Heart left ventricle (tissue), 16 donors: ENCODE measurements at regions of chr9 and their contacts with region 1.

Region 1: DNA sequence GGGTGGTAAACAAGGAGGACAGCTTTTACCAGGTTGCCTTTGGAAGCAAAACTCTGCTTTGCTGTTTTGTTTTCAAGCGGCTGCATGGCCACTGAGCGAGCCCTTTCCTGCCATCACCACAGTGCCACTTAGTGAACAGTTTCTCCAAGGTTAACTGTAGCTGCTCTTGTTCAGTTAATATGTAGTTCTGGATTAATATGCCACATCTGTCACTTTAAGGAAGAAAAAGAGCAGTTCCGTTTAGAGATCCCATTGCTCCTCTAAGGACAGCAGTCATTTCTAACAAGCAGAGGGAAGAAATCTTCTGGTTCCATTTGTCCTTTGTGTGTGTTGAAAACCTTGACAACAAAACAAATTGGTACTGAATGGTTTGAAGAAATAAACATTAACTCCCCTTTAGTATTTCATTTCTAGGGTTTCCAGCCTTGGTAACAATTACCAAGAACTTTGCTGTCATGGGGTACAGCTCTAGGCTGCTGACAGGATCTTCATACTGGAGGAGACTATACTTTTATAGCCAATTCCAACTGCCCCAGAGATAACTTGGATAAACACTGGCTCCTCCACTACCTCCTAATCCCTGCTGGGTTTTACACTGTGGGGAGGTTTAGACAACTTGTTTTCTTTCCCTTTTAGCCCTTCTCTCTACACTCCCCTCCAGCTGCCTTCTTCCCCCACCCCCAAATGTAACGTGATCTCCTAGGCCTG is 10.3 kb upstream of the ABL1 start:
- DNase-seq: peak in 1 of 5 donors; percentile 44
- ATAC-seq: peak; percentile 77 to 91 (median 80)
- H3K4me3 ChIP-seq: peak overlapping the region in 3 of 12 donors; percentile 22 to 27 (median 23)
- H3K27ac ChIP-seq: peak overlapping the region; percentile 8 to 85 (median 78)
- H3K4me1 ChIP-seq: peaks cover 0 to 36% (median 25%) of the 10 kb centered on the region in 12 donors
- H3K27me3 ChIP-seq: no peaks in the 10 kb centered on the region
- CTCF ChIP-seq: no peak
- POLR2A ChIP-seq: no peak

Region 2: DNA sequence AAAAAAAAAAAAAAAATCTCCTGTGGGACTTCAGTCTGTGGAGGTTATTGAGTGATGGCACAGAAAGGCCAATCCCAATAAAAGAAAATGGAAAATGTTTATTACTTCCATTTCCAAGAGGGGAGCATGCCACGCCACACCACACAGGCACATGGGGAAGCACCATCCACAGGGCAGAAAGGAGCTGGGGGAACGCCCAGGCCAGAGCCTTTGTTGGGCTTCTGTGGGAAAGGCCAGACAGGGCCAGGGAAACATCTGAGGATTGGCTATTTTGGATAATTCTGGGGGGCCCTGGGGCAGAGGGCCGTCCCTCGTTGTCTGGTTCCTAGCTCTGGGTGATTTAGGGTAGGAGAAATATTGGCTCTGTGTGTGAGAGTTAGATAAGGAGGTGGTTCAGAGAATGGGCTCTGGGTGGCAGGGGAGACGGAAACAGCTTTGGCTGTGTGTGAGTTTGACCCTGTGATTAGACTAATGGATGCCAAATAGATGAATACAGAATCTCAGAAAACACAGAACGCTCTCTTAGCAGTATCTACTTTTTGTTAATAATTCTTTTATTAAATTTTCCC is 38.8 kb before region 1 on chr9:
- intact Hi-C with region 1: loop called in 1 of 10 experiments (anchors 5 kb)
- DNase-seq: no peak
- ATAC-seq: peak; percentile 29 to 33 (median 31)
- H3K4me3 ChIP-seq: no peak overlapping the region
- H3K27ac ChIP-seq: peak overlapping the region in 6 of 12 donors; percentile 31 to 72 (median 55)
- H3K4me1 ChIP-seq: peaks cover 3 to 58% (median 32%) of the 10 kb centered on the region in 12 donors
- H3K27me3 ChIP-seq: no peaks in the 10 kb centered on the region
- CTCF ChIP-seq: peak in 1 of 12 donors; percentile 3
- POLR2A ChIP-seq: no peak

Region 3: DNA sequence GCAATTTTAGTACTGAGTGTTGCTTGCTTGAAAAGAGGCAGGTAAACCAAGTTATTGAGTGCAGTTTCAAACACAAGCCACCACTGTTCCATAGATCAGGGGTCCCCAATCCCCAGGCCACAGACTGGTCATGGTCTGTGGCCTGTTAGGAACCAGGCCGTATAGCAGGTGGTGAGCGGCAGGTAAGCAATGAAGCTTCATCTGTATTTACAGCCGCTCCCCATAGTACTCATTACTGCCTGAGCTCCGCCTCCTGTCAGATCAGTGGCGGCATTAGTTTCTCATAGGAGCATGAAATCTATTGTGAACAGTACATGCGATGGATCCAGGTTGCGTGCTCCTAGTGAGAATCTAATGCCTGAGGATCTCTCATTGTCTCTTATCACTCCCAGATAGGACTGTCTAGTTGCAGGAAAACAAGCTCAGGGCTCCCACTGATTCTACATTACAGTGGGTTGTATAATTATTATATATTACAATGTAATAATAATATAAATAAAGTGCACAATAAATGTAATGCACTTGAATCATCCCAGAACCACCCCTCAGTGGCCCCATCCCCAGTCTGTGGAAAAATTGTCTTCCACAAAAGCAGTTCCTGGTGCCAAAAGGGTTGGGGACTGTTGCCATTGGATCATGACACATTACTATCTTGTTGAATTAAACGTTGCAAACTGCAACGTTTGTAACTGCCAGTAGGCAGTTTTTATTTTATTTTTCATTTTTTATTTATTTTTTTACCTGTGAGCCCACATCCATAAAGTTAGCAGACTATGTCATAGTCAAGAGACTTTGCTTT is 31.0 kb before region 1 on chr9:
- intact Hi-C with region 1: loop called in 2 of 10 experiments (anchors 2 to 5 kb)
- DNase-seq: no peak
- ATAC-seq: no peak
- H3K4me3 ChIP-seq: no peak overlapping the region
- H3K27ac ChIP-seq: peak overlapping the region in 1 of 12 donors; percentile 74
- H3K4me1 ChIP-seq: peaks cover 0 to 17% (median 9%) of the 10 kb centered on the region in 12 donors
- H3K27me3 ChIP-seq: no peaks in the 10 kb centered on the region
- CTCF ChIP-seq: no peak
- POLR2A ChIP-seq: no peak

Region 4: DNA sequence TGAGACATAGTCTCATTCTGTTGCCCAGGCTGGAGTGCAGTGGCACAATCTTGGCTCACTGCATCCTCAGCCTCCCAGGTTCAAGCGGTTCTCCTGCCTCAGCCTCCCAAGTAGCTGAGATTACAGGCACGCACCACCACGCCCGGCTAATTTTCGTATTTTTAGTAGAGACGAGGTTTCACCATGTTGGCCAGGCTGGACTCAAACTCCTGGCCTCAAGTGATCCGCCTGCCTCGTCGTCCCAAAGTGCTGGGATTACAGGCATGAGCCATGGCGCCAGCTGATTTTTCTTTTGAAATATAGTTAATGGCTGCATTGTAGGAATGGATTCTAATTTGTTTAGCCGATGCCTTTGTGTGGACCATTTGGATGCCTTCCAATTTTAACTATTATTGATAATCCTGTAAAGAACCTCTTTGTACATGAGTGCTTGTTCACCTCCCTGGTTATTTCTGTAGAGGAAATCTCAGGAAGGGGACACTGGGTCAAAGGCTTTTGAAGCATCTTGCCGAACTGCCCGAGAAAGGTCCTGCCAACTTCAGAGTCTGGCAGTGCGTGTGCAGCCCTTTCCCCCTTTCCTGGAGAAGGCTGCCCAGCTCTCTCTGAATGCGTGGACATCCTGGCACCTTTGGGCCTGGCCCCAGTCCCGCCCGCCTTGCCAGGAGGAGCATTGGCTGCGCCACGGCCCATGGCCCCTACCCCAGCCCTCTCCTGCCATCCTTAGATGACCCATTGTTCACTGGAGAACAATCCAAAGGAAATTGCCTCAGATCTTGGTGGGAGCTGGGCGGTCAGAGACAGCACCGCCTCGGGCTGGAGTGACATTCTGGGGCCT is 291.7 kb after region 1 on chr9:
- intact Hi-C with region 1: no loop called
- DNase-seq: peak in 3 of 5 donors; percentile 45 to 70 (median 59)
- ATAC-seq: peak; percentile 67 to 92 (median 82)
- H3K4me3 ChIP-seq: no peak overlapping the region
- H3K27ac ChIP-seq: peak overlapping the region; percentile 24 to 89 (median 76)
- H3K4me1 ChIP-seq: peaks cover 0 to 34% (median 10%) of the 10 kb centered on the region in 12 donors
- H3K27me3 ChIP-seq: no peaks in the 10 kb centered on the region
- CTCF ChIP-seq: no peak
- POLR2A ChIP-seq: no peak